CD8-positive, alpha-beta memory T cell (primary cell): ENCODE measurements at regions of chr17 and their contacts with region 1.

Region 1: DNA sequence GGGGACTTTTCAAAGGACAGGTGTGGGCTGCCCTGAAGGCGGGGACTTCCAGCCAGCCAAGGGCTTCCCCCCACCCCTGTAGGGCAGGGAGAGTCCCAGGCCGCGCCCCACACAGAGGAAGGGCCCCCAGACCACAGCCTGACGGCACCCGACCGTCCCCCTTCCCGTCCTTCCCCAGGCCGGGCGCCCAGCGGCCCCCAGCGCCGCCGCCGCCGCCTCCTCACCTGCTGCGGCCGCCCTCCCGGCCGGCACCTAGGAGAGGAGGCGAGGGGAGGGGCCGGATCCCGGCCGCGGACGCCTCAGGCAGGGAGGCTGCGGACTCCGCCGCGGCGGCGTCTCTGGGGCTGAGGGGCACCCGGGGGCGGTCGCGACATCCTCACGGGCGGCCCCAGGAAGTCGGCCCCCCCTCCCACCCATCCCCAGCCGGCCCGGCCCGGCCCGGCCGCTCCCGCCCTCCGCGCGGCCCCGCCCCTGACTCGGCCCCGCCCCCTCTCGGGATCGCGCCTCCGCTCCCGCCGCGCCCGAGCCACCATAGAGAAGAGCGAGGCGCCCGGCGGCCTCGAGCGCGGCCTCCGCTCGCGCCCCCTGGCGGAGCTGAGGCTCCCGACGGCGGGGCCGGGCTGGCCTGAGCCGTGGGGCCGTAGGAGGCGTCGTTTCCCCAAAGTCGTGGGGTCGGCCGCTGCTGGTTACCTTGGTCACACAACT is 25.5 kb upstream of the RFFL start:
- DNase-seq: peak; percentile 86 to 92 (median 88)
- H3K4me3 ChIP-seq: peak overlapping the region; percentile 96
- H3K4me3 Mint-ChIP-seq: peak overlapping the region; percentile 95 to 98 (median 97)
- H3K27ac ChIP-seq: peak overlapping the region; percentile 90
- H3K27ac Mint-ChIP-seq: peak overlapping the region; percentile 94 to 99 (median 98)
- H3K4me1 ChIP-seq: peaks cover 29% of the 10 kb centered on the region
- H3K4me1 Mint-ChIP-seq: peaks cover 43 to 52% (median 47%) of the 10 kb centered on the region in 3 donors
- H3K27me3 ChIP-seq: no peaks in the 10 kb centered on the region
- H3K27me3 Mint-ChIP-seq: no peaks in the 10 kb centered on the region

Region 2: GRCh38 chr17:34980681-34981537 is 108.1 kb before region 1 on chr17:
- CTCF ChIA-PET with region 1: interaction called, 11 read pairs
- POLR2A ChIA-PET with region 1: interaction called, 3 read pairs
- DNase-seq: peak; percentile 69 to 82 (median 75)
- H3K4me3 ChIP-seq: peak overlapping the region; percentile 76
- H3K4me3 Mint-ChIP-seq: peak overlapping the region; percentile 94 to 99 (median 96)
- H3K27ac ChIP-seq: peak overlapping the region; percentile 94
- H3K27ac Mint-ChIP-seq: peak overlapping the region; percentile 92 to 99 (median 98)
- H3K4me1 ChIP-seq: peaks cover 48% of the 10 kb centered on the region
- H3K4me1 Mint-ChIP-seq: peaks cover 44 to 61% (median 52%) of the 10 kb centered on the region in 3 donors
- H3K27me3 ChIP-seq: no peaks in the 10 kb centered on the region
- H3K27me3 Mint-ChIP-seq: no peaks in the 10 kb centered on the region

Region 3: DNA sequence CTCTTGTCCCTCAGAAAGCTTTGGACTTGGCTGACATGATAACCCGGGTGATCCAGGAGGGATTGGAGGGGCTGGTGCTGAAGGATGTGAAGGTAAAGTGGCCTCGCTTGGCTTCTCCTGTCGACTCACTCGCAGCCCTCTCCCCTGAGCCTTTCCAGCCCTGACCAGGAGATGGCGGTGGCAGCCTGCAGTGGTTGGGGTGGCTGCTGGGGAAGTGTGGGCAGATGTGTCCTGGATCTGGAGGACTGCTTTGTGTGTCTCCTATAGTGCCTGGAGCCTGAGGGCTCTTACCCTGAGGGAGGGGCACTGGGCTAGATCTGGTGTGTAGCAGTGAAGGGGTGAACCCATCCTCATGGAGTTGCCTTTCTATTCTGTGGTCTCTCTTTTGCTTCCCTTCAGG is 90.8 kb before region 1 on chr17:
- CTCF ChIA-PET with region 1: interaction called, 25 read pairs
- POLR2A ChIA-PET with region 1: no interaction called
- DNase-seq: peak; percentile 62 to 83 (median 68)
- H3K4me3 ChIP-seq: no peak overlapping the region
- H3K4me3 Mint-ChIP-seq: no peak overlapping the region
- H3K27ac ChIP-seq: no peak overlapping the region
- H3K27ac Mint-ChIP-seq: peak overlapping the region; percentile 10 to 82 (median 70)
- H3K4me1 ChIP-seq: no peaks in the 10 kb centered on the region
- H3K4me1 Mint-ChIP-seq: peaks cover 5 to 10% (median 8%) of the 10 kb centered on the region in 3 donors
- H3K27me3 ChIP-seq: no peaks in the 10 kb centered on the region
- H3K27me3 Mint-ChIP-seq: no peaks in the 10 kb centered on the region

Region 4: GRCh38 chr17:35022536-35023063 is 66.4 kb before region 1 on chr17:
- CTCF ChIA-PET with region 1: interaction called, 14 read pairs
- POLR2A ChIA-PET with region 1: interaction called, 8 read pairs
- DNase-seq: peak; percentile 60 to 80 (median 62)
- H3K4me3 ChIP-seq: peak overlapping the region; percentile 36
- H3K4me3 Mint-ChIP-seq: peak overlapping the region in 6 of 7 donors; percentile 29 to 87 (median 74)
- H3K27ac ChIP-seq: peak overlapping the region; percentile 62
- H3K27ac Mint-ChIP-seq: peak overlapping the region; percentile 95 to 99 (median 98)
- H3K4me1 ChIP-seq: peaks cover 35% of the 10 kb centered on the region
- H3K4me1 Mint-ChIP-seq: peaks cover 46 to 74% (median 71%) of the 10 kb centered on the region in 3 donors
- H3K27me3 ChIP-seq: no peaks in the 10 kb centered on the region
- H3K27me3 Mint-ChIP-seq: no peaks in the 10 kb centered on the region

Region 5: GRCh38 chr17:35242805-35243560 is 153.9 kb after region 1 on chr17 and contains the start of gene SLFN5:
- CTCF ChIA-PET with region 1: no interaction called
- POLR2A ChIA-PET with region 1: no interaction called
- DNase-seq: peak; percentile 88 to 96 (median 92)
- H3K4me3 ChIP-seq: peak within 1 kb of the TSS; percentile 99
- H3K4me3 Mint-ChIP-seq: peak within 1 kb of the TSS; percentile 97 to 100 (median 99)
- H3K27ac ChIP-seq: peak within 1 kb of the TSS; percentile 96
- H3K27ac Mint-ChIP-seq: peak within 1 kb of the TSS; percentile 98 to 100 (median 99)
- H3K4me1 ChIP-seq: peaks cover 33% of the 10 kb centered on the region
- H3K4me1 Mint-ChIP-seq: peaks cover 64 to 70% (median 68%) of the 10 kb centered on the region in 3 donors
- H3K27me3 ChIP-seq: no peaks in the 10 kb centered on the region
- H3K27me3 Mint-ChIP-seq: peaks cover 0 to 8% of the 10 kb centered on the region in 2 donors
- total RNA-seq, gene SLFN5: 28.6 to 30.2 TPM

Region 6: DNA sequence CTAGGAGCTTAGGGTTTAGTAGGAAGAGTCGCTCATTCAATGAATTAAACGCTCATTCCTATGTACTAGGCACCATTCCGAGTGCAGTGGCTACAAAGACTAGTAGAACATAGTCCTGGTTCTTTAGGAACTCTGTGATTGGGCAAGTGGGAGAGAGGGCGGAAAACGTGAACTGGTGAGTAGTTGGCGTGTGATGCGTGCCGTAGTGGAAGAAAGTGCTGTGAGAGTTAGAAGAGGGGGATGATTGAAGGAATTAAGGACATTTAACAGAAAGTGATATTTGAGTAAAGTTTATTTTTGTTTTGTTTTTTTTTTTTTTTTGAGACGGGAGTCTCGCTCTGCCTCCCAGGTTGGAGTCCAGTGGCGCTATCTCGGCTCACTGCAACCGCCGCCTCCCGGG is 479.5 kb after region 1 on chr17:
- CTCF ChIA-PET with region 1: no interaction called
- POLR2A ChIA-PET with region 1: interaction called, 11 read pairs
- DNase-seq: peak in 1 of 5 donors; percentile 3
- H3K4me3 ChIP-seq: peak overlapping the region; percentile 90
- H3K4me3 Mint-ChIP-seq: peak overlapping the region; percentile 80 to 99 (median 97)
- H3K27ac ChIP-seq: peak overlapping the region; percentile 73
- H3K27ac Mint-ChIP-seq: peak overlapping the region; percentile 84 to 99 (median 94)
- H3K4me1 ChIP-seq: peaks cover 23% of the 10 kb centered on the region
- H3K4me1 Mint-ChIP-seq: peaks cover 30 to 42% (median 36%) of the 10 kb centered on the region in 3 donors
- H3K27me3 ChIP-seq: no peaks in the 10 kb centered on the region
- H3K27me3 Mint-ChIP-seq: peaks cover 0 to 4% of the 10 kb centered on the region in 2 donors